Dendritic cell treated with granulocyte-macrophage colony-stimulating factor and Interleukin-4, amounts not matched to agents 40 ng/mL and 50 ng/mL, for 4 days (primary cell): ENCODE measurements at regions of chr13 and their contacts with region 1.

Region 1: GRCh38 chr13:91154558-91155353 is 192.7 kb upstream of the MIR17HG start:
- H3K4me3 Mint-ChIP-seq: peak overlapping the region; percentile 71
- H3K27ac Mint-ChIP-seq: peak overlapping the region; percentile 97
- H3K4me1 Mint-ChIP-seq: peaks cover 33% of the 10 kb centered on the region
- H3K27me3 Mint-ChIP-seq: peaks cover 5% of the 10 kb centered on the region

Region 2: GRCh38 chr13:91078093-91078679 is 76.6 kb before region 1 on chr13:
- intact Hi-C with region 1: loop called (anchors 2 kb)
- H3K4me3 Mint-ChIP-seq: no peak overlapping the region
- H3K27ac Mint-ChIP-seq: no peak overlapping the region
- H3K4me1 Mint-ChIP-seq: no peaks in the 10 kb centered on the region
- H3K27me3 Mint-ChIP-seq: no peaks in the 10 kb centered on the region

Region 3: GRCh38 chr13:91144054-91144453 is 10.7 kb before region 1 on chr13:
- intact Hi-C with region 1: loop called (anchors 1 kb)
- H3K4me3 Mint-ChIP-seq: no peak overlapping the region
- H3K27ac Mint-ChIP-seq: peak overlapping the region; percentile 77
- H3K4me1 Mint-ChIP-seq: peaks cover 41% of the 10 kb centered on the region
- H3K27me3 Mint-ChIP-seq: no peaks in the 10 kb centered on the region

Region 4: DNA sequence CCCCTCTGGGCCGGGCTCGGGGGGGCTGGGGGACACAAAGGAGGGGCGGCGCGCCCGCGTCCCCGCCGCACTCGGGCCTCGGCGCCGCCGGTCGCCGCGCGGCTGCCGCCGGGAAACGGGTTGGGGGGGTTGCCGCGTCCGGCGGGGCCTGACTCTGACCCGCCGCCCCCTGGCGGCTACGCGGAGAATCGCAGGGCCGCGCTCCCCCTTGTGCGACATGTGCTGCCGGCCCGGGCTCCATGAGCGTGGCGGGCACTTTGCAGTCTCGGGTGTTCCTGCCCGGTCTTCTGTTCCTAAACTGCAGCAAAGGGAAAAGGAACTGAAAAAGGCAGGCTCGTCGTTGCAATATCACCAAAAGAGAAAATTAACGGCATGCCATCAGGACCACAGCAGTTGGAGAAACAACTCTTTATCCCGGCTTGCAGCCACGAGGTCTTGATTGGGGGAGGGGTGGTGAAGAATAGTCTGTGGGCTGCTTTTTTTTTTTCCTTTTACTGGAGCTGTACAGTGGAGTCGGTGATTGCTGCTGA is 194.2 kb after region 1 on chr13:
- intact Hi-C with region 1: loop called (anchors 5 kb)
- H3K4me3 Mint-ChIP-seq: peak overlapping the region; percentile 74
- H3K27ac Mint-ChIP-seq: peak overlapping the region; percentile 77
- H3K4me1 Mint-ChIP-seq: peaks cover 20% of the 10 kb centered on the region
- H3K27me3 Mint-ChIP-seq: peaks cover 5% of the 10 kb centered on the region

Region 5: GRCh38 chr13:91664038-91664437 is 509.3 kb after region 1 on chr13:
- intact Hi-C with region 1: no loop called
- H3K4me3 Mint-ChIP-seq: no peak overlapping the region
- H3K27ac Mint-ChIP-seq: no peak overlapping the region
- H3K4me1 Mint-ChIP-seq: no peaks in the 10 kb centered on the region
- H3K27me3 Mint-ChIP-seq: no peaks in the 10 kb centered on the region